ENCODE measurements at regions of chr14 and their contacts with region 1.

Region 1: GRCh38 chr14:52473557-52473956 is 78.7 kb downstream of the TXNDC16 start:
- DNase-seq: no peak
- ATAC-seq: no peak
- H3K4me3 ChIP-seq: no peak overlapping the region
- H3K27ac ChIP-seq: no peak overlapping the region
- H3K4me1 ChIP-seq: no peaks in the 10 kb centered on the region
- H3K27me3 ChIP-seq: no peaks in the 10 kb centered on the region
- CTCF ChIP-seq: peak; percentile 30; the same call in 1 of the 2 replicates

Region 2: GRCh38 chr14:52272375-52272774 is 201.2 kb before region 1 on chr14:
- CTCF ChIA-PET with region 1: no interaction called
- POLR2A ChIA-PET with region 1: no interaction called
- in situ Hi-C with region 1: no loop called
- intact Hi-C with region 1: no loop called
- DNase-seq: no peak
- ATAC-seq: no peak
- H3K4me3 ChIP-seq: no peak overlapping the region
- H3K27ac ChIP-seq: no peak overlapping the region
- H3K4me1 ChIP-seq: no peaks in the 10 kb centered on the region; the same call in 1 of the 2 replicates
- H3K27me3 ChIP-seq: peaks cover 8% of the 10 kb centered on the region
- CTCF ChIP-seq: peak; percentile 52

Region 3: DNA sequence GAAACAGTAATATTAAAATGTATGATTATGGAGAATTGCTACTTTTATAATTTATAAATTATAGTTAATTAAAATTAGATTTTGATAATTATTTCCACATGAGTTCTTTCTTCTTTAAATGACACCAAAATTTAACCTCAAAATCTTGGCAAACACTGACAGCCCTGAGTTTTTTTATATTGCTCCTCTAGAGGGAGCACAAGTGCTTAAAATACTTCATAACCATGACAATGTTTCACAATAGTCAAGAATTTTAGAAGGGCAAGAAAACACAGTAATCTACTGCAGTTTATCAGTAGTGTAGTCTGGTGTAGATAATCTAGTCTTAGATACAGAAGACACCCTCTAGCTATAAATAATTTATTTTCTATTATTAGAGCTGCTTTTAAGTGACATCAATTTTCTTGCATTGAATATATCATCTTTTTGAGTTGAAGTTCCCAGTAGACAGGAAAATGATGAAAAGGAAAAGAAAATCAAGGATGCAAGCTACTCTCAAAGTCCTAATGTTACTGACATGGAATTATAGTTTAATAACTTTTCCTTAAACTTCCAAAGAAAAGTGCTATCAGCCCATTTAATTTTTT is 173.8 kb before region 1 on chr14:
- CTCF ChIA-PET with region 1: interaction called, 6 read pairs
- POLR2A ChIA-PET with region 1: no interaction called
- in situ Hi-C with region 1: no loop called
- intact Hi-C with region 1: loop called (anchors 5 kb)
- DNase-seq: peak; percentile 28
- ATAC-seq: no peak
- H3K4me3 ChIP-seq: no peak overlapping the region
- H3K27ac ChIP-seq: no peak overlapping the region
- H3K4me1 ChIP-seq: no peaks in the 10 kb centered on the region
- H3K27me3 ChIP-seq: no peaks in the 10 kb centered on the region
- CTCF ChIP-seq: peak; percentile 58; the same call in 1 of the 2 replicates

Region 4: DNA sequence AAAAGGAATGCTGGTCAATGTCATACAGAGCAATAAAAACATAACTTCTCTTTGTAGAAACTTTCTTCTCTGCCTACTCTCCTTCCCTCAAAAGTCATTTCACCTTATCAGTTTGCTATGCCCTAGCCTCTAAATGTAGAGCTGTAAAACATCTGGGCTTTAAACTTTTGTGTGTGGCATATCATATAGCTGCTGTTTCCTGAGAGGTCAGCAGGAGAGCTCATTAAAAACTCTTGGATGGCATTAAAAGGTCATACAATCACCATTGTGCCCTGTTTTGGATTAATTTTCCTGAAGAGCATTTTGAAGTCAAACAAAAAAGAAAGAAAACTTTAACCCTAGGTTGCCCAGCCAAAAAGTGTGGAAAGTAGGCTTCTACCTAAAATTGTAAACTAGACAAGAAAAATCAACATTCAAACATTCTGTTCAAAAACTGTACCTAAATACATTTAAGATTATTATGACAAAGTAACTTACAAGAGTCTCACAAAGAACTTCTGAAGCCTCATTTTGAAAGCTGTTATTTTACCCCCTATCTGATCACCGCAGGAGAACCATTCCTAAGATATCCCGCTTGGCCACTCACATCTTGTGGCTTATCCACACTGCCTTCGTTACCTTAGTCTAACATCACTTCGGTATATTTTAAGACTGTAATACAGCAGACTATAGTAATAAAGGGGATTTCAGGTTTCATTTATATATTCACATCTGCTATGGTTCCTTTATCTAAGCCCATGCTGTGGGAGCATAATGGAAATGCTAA is 40.7 kb after region 1 on chr14:
- CTCF ChIA-PET with region 1: no interaction called
- POLR2A ChIA-PET with region 1: no interaction called
- in situ Hi-C with region 1: no loop called
- intact Hi-C with region 1: no loop called
- DNase-seq: no peak
- ATAC-seq: no peak
- H3K4me3 ChIP-seq: no peak overlapping the region
- H3K27ac ChIP-seq: no peak overlapping the region
- H3K4me1 ChIP-seq: no peaks in the 10 kb centered on the region
- H3K27me3 ChIP-seq: no peaks in the 10 kb centered on the region
- CTCF ChIP-seq: no peak

Measured in Panc1 (cell line).